ENCODE measurements at regions of chr3 and their contacts with region 1.

Region 1: DNA sequence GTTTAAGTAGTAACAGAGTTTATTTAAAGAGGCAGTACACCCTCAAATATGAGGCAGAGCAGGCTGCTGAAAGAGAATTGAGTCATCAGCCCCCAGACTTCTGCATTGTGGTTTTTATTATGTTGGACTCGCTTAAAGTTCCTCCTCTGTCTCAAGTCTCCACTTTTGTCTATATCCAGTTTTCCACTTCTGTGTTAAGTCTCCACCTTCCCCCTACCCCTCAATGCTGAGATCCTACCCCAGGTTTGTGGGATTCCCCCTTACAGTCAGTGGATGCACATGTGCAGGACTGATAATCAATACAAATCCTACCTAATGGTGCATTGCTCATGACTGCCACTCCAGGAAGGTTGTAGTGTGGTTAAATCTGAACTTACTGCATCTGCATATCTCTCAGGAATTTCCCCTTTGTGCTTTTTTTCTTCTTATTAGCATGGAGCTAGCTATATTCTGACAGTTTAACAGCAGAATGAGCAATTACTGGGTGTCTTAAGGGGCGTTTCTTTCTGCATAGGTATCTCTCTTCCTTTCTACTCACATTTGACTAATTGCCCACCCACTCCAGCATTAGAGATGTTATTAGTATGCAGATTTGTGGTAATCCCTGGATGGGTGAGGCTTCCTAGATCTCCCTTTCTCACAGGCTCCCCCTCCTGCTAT is 11.9 kb upstream of the CD200R1L start:
- DNase-seq: peak; percentile 32
- ATAC-seq: peak; percentile 76
- H3K4me3 Mint-ChIP-seq: peak overlapping the region; percentile 69
- H3K27ac Mint-ChIP-seq: peak overlapping the region; percentile 89
- H3K4me1 Mint-ChIP-seq: peaks cover 45% of the 10 kb centered on the region
- H3K27me3 Mint-ChIP-seq: no peaks in the 10 kb centered on the region
- CTCF ChIP-seq: no peak

Region 2: DNA sequence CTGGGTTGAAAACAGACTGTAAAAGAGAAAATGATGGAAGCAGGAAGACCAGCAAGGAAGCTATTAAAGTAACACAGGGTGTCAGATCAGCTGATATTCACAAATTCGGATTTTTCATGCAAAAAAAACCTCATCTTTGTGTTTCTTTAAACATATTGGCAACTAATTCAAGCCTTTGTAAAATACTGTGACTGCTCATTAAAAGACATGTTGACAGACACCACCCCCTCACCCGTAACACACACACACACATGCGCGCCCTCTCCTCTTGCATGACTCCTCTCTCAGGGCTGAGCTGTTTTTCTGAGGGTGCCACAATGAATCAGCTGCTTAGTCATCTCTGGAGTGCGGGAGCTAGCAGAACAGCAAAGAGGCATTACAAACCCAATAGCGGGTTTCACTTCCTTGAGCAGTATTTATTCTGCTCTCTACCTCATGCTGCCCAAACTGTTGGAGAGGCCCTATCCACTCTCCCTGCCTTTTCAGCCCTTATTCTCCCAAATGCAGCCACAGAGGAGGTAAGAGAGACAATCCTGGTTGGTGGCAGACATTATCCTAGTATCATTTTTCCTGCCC is 181.8 kb before region 1 on chr3:
- CTCF ChIA-PET with region 1: no interaction called
- POLR2A ChIA-PET with region 1: interaction called, 3 read pairs
- intact Hi-C with region 1: loop called (anchors 5 kb)
- DNase-seq: peak; percentile 57
- ATAC-seq: peak; percentile 98
- H3K4me3 Mint-ChIP-seq: peak overlapping the region; percentile 67
- H3K27ac Mint-ChIP-seq: peak overlapping the region; percentile 84
- H3K4me1 Mint-ChIP-seq: peaks cover 25% of the 10 kb centered on the region
- H3K27me3 Mint-ChIP-seq: peaks cover 8% of the 10 kb centered on the region
- CTCF ChIP-seq: no peak

Region 3: GRCh38 chr3:112847692-112848091 is 10.8 kb before region 1 on chr3:
- CTCF ChIA-PET with region 1: no interaction called
- POLR2A ChIA-PET with region 1: no interaction called
- intact Hi-C with region 1: loop called (anchors 2 kb)
- DNase-seq: no peak
- ATAC-seq: peak; percentile 87
- H3K4me3 Mint-ChIP-seq: peak overlapping the region; percentile 13
- H3K27ac Mint-ChIP-seq: peak overlapping the region; percentile 74
- H3K4me1 Mint-ChIP-seq: peaks cover 32% of the 10 kb centered on the region
- H3K27me3 Mint-ChIP-seq: no peaks in the 10 kb centered on the region
- CTCF ChIP-seq: no peak

Region 4: DNA sequence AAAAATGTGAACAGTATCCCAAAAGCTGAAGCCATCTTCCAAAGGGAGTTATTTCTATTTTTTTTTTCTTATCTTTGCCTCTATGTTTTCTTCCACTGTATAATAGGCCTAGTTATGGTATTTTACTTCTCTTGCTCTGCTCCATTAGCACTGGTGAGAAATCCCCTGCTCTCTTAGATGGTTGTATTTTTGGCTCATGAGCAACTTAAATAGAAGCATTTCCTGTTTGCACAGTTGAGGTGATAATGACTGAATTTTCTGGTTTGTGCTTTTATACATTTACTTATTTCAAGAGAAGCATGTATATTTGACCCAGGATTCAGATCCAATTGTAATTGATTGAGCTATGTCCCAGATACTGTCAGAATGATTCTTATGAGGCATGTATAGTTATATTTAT is 49.7 kb after region 1 on chr3:
- CTCF ChIA-PET with region 1: no interaction called
- POLR2A ChIA-PET with region 1: interaction called, 3 read pairs
- intact Hi-C with region 1: loop called (anchors 1 kb)
- DNase-seq: no peak
- ATAC-seq: peak; percentile 93
- H3K4me3 Mint-ChIP-seq: peak overlapping the region; percentile 73
- H3K27ac Mint-ChIP-seq: peak overlapping the region; percentile 95
- H3K4me1 Mint-ChIP-seq: peaks cover 67% of the 10 kb centered on the region
- H3K27me3 Mint-ChIP-seq: no peaks in the 10 kb centered on the region
- CTCF ChIP-seq: no peak

Region 5: DNA sequence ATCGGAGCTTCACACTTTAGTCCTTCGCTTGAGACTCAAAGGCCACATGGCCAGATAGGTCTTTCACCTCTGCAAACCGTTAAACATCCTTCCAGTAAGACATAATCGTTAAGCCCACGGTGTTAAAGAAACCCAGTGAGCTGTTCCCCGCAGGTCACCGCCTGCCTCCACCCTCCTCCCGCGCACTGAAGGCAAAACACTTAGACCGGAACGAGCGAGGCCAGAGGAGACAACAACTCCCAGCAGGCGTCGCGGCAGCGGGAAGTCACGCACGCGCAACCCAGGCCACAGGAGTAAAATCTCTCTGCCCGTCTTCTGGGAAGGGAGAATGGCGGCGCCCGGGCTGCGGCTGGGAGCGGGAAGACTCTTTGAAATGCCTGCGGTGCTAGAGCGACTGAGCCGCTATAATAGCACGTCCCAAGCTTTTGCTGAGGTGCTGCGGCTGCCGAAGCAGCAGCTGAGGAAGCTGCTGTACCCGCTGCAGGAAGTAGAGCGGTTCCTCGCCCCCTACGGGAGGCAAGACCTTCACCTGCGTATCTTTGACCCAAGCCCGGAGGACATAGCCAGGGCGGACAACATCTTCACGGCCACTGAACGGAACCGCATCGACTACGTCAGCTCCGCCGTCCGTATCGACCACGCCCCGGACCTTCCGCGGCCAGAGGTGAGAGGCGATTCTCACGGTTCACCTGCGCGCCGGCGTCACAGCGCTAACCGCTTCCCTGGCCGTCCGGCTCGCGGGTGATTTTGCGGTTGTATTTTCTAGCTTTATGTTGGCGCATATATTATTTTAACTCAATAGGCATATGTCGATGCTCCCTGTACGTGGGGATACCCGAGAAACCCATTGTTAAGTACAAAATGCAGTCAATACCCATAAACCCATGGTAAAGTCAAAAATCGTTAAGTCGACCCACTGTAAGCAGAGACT is 132.4 kb after region 1 on chr3 and contains the start of gene GTPBP8:
- CTCF ChIA-PET with region 1: no interaction called
- POLR2A ChIA-PET with region 1: no interaction called
- intact Hi-C with region 1: loop called (anchors 1 kb)
- DNase-seq: peak; percentile 79
- ATAC-seq: peak; percentile 86
- H3K4me3 Mint-ChIP-seq: peak within 1 kb of the TSS; percentile 92
- H3K27ac Mint-ChIP-seq: peak within 1 kb of the TSS; percentile 92
- H3K4me1 Mint-ChIP-seq: peaks cover 27% of the 10 kb centered on the region
- H3K27me3 Mint-ChIP-seq: no peaks in the 10 kb centered on the region
- CTCF ChIP-seq: no peak
- total RNA-seq, gene GTPBP8: 14.3 and 18.1 TPM in 2 replicates

Region 6: GRCh38 chr3:113668015-113668414 is 809.5 kb after region 1 on chr3:
- CTCF ChIA-PET with region 1: no interaction called
- POLR2A ChIA-PET with region 1: no interaction called
- intact Hi-C with region 1: no loop called
- DNase-seq: no peak
- ATAC-seq: peak; percentile 31
- H3K4me3 Mint-ChIP-seq: peak overlapping the region; percentile 53
- H3K27ac Mint-ChIP-seq: peak overlapping the region; percentile 71
- H3K4me1 Mint-ChIP-seq: peaks cover 53% of the 10 kb centered on the region
- H3K27me3 Mint-ChIP-seq: no peaks in the 10 kb centered on the region
- CTCF ChIP-seq: no peak